Activated naive CD4-positive, alpha-beta T cell treated with anti-CD3 and anti-CD28 coated beads, Interleukin-2, amount 10 ng/mL, durations not matched to agents 7 days and 5 days (primary cell): ENCODE measurements at regions of chr1 and their contacts with region 1.

Region 1: DNA sequence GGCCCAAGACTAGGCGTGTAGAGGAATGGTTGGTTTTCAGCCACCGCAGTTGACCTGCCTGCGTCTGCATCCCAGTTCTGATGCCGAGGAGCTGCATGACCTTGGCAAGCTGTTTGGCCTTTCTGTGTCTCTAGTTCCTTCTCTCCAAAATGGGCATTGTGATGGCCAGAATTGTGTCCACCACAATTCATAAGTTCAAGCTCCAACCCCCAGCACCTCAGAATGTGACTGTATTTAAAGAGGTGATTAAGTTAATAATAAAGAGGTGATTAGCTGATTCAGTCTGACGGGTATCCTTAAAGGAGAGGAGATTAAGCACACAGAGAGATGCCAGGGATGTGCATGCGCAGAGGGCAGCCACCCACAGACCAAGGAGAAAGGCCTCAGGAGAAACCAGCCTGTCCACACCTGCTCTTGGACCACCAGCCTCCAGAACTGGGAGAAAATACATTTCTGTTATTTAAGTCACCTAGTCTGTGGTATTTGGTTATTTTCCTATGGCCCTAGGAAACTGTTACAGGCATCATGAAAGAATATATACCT is 28.5 kb downstream of the MAB21L3 start:
- DNase-seq: no peak
- H3K4me3 Mint-ChIP-seq: no peak overlapping the region
- H3K27ac Mint-ChIP-seq: no peak overlapping the region
- H3K4me1 Mint-ChIP-seq: peaks cover 7% of the 10 kb centered on the region
- H3K27me3 Mint-ChIP-seq: peaks cover 13% of the 10 kb centered on the region

Region 2: DNA sequence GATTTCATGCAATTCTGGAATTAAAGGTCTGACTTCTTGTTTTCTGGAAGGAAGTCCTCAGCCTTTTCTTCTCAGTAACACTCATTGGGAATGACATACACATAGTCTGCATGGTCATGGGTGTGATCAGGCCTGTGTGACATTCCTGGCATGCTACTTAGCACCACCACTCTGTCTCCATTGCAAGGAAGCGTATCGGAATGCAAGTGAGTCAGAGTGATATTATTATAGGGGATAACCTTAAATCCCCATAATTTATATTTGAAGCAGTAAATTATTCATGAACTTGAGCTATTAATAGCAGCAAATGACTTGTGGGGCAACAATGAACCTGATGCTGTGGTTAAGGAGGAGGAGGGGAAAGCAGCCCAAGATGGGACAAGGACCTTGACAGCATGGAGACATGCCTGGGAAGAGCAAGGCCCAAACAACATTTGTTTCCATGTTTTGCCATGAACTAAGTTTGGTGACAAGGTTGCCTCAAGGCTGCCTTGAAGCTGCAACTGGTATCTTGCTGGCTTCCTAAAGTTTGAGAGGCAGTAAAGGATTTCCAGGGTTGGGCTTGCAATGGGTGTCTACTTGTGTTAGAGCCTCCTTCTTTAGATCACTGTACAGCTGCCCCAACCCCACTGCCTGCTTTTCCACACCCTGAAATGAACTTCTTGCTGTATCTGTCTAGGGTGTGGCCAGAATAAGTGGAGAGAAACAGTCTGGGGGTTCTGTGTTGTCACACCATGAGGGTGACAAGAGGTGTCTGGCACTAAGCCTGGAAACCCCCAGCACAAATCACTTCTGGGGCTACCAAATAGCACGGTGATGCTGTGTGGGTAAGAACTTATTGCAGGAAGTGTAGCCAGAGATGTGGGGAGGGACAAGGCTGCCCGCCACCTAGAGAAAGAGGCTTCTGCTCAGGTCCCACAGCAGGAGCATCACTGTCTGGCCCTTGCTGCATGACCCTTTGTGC is 23.9 kb before region 1 on chr1:
- CTCF ChIA-PET with region 1: no interaction called
- DNase-seq: no peak
- H3K4me3 Mint-ChIP-seq: no peak overlapping the region
- H3K27ac Mint-ChIP-seq: no peak overlapping the region
- H3K4me1 Mint-ChIP-seq: no peaks in the 10 kb centered on the region
- H3K27me3 Mint-ChIP-seq: peaks cover 9% of the 10 kb centered on the region

Region 3: GRCh38 chr1:116151739-116152576 is 12.3 kb after region 1 on chr1:
- CTCF ChIA-PET with region 1: interaction called, 55 read pairs
- DNase-seq: peak; percentile 76
- H3K4me3 Mint-ChIP-seq: peak overlapping the region; percentile 35
- H3K27ac Mint-ChIP-seq: peak overlapping the region; percentile 50
- H3K4me1 Mint-ChIP-seq: peaks cover 19% of the 10 kb centered on the region
- H3K27me3 Mint-ChIP-seq: peaks cover 21% of the 10 kb centered on the region

Region 4: GRCh38 chr1:116168277-116169097 is 28.8 kb after region 1 on chr1:
- CTCF ChIA-PET with region 1: interaction called, 45 read pairs
- DNase-seq: peak; percentile 88
- H3K4me3 Mint-ChIP-seq: peak overlapping the region; percentile 75
- H3K27ac Mint-ChIP-seq: peak overlapping the region; percentile 80
- H3K4me1 Mint-ChIP-seq: peaks cover 22% of the 10 kb centered on the region
- H3K27me3 Mint-ChIP-seq: peaks cover 31% of the 10 kb centered on the region

Region 5: DNA sequence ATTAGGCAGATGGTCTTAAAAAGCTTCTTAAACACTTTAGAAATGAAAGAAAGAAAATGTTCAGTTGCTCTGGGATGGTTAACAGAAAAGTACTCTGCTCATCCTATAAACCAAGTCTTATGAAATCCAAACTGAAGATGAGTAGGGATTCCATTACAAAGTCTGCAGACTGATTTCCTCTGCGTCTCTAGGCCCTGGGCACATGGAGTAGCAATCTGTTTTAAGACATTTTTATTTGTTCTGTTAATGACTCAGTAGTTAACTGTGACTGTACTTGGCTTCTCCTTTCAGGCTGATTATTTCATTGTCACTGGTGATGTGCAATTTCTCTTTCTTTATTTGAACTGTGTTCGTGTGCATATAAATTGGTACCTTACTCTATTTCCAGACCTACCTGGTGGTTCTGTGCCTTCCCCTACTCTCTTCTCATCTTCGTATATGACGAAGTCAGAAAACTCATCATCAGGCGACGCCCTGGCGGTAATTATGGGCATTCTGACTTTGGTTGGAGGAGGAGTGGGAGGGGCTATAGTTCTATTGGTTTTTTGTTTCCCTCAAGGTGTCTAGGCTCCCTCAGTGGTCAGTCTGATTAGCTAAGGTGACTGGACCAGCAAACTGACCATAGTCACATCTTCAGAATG is 264.0 kb after region 1 on chr1:
- CTCF ChIA-PET with region 1: interaction called, 12 read pairs
- DNase-seq: no peak
- H3K4me3 Mint-ChIP-seq: no peak overlapping the region
- H3K27ac Mint-ChIP-seq: no peak overlapping the region
- H3K4me1 Mint-ChIP-seq: peaks cover 18% of the 10 kb centered on the region
- H3K27me3 Mint-ChIP-seq: no peaks in the 10 kb centered on the region